ENCODE measurements at regions of chr19 and their contacts with region 1.

Region 1: DNA sequence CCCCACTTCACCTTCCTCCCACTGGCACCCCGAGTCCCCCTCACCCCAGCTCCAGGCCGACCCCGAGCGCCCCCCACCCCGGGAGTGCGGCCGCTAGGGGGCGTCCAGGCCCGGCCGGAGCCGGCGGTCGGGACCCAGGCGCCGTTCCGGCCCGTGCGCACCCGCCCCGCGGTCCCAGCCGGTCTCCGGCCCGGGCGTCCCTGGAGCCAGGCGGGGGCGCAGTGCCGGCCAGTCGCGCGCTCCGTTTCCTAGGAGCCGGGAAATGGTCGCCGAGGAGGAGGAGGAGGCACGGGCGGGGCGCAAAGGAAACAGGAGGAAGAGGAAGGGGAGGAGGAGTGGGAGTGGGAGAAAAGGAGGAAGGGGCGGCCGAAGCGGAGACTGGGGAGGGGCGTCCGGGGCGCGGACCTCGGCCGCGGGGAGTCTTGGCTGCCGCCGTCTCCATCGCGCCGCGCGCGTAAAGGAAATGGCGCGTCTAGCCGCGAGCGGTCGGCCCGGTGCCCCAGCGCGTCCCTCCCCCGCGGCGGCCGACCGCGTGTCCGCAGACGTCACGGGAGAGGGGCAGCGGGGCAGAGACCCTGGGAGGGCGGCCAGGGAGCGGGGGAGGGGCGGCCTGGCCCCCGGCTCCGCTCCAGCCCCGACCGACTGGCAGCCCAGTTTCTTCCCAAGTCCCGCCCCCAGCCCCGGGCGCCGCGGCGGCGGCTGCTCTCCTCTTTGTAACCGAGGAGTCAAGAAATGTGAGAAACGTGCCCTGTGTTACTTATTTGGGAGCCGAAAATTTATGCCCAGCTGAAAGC is 1.1 kb upstream of the KCTD15 start:
- H3K4me3 ChIP-seq: peak overlapping the region; percentile 63
- H3K27ac ChIP-seq: peak overlapping the region; percentile 100
- H3K4me1 ChIP-seq: peaks cover 18% of the 10 kb centered on the region
- CTCF ChIP-seq: peak; percentile 99

Region 2: DNA sequence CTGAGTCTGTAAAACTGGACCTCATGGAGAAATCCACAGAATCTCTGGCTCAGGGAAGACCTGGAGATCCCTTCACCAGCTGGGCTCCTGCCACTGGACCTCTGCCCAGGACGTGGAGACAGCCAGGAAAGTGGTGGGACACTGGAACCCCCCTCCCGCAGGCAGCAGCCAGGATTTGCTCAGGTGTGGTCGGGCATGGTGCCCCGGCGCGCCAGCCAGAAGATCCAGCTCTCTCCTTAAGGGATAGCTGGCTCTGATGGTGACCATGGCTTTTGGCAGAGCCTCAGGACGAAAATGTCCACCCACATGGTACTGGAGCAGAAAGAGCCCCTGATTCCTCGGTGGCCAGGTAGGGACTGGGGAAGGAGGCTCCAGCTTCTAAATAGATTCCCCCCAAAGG is 25.5 kb before region 1 on chr19:
- CTCF ChIA-PET with region 1: no interaction called
- POLR2A ChIA-PET with region 1: no interaction called
- H3K4me3 ChIP-seq: no peak overlapping the region
- H3K27ac ChIP-seq: no peak overlapping the region
- H3K4me1 ChIP-seq: no peaks in the 10 kb centered on the region
- CTCF ChIP-seq: no peak

Region 3: GRCh38 chr19:33819880-33820781 is 24.6 kb after region 1 on chr19:
- CTCF ChIA-PET with region 1: interaction called, 23 read pairs
- POLR2A ChIA-PET with region 1: interaction called, 16 read pairs
- H3K4me3 ChIP-seq: peak overlapping the region; percentile 18
- H3K27ac ChIP-seq: peak overlapping the region; percentile 74; the same call in 1 of the 2 replicates
- H3K4me1 ChIP-seq: peaks cover 19% of the 10 kb centered on the region
- CTCF ChIP-seq: peak; percentile 13

Region 4: DNA sequence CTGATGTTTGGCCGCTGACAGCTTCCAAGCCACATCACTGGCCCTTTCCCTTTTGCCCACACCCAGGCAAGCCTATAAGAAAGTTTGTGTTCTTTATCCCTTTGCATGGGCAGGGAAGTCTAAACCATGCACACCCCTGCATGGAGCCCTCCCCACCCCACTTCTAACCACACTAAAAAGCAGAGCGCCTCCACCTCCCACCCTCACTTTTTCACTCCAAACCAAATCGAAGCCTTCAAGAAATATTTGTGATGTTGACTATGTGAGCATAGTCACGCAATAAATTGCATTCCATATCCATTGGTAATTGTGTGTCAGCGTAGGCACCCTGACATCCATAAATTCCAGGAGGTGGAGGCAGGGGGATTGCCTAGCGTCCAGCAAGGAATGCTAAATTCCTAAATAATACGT is 272.3 kb after region 1 on chr19:
- CTCF ChIA-PET with region 1: interaction called, 11 read pairs
- POLR2A ChIA-PET with region 1: no interaction called
- H3K4me3 ChIP-seq: no peak overlapping the region
- H3K27ac ChIP-seq: no peak overlapping the region
- H3K4me1 ChIP-seq: peaks cover 3% of the 10 kb centered on the region; the same call in 1 of the 2 replicates
- CTCF ChIP-seq: no peak